Mammary epithelial cell (primary cell): ENCODE measurements at regions of chr13 and their contacts with region 1.

Region 1: DNA sequence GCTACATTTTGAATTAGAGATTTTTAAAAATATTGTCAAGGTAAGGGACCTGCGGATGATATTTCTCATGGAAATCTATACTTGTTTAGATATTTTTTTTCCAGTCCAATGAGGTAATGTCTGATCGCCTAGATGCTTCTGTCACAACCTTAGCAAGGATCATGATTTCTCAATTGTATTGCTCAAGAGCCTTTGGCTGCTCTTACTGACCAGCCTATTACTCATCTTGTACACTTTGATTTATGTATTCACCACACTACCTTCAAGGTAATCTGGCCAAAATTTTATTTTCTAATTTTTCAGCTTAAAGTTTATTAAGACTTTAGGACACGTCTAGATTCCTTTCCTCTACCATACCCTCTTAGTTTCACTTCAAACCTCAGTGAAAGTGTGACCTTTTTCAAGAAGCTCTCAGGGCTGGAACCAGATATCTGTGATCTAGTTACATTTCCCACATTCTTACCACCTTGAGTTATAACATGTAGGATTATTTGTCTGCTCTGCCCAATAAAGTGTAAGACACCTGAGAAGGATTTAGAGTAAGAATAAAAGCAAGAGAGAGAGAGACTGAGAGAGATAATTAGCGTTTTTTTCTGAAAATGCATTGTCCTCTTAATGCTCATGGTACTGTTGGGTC is 197.1 kb downstream of the ITGBL1 start:
- DNase-seq: peak; percentile 87
- H3K4me3 ChIP-seq: no peak overlapping the region
- H3K27ac ChIP-seq: no peak overlapping the region
- H3K4me1 ChIP-seq: peaks cover 5% of the 10 kb centered on the region
- H3K27me3 ChIP-seq: no peaks in the 10 kb centered on the region
- CTCF ChIP-seq: no peak

Region 2: GRCh38 chr13:101706651-101707050 is 57.0 kb after region 1 on chr13:
- CTCF ChIA-PET with region 1: no interaction called
- dilution Hi-C with region 1: no loop called
- in situ Hi-C with region 1: no loop called
- intact Hi-C with region 1: loop called (anchors 2 kb)
- DNase-seq: peak; percentile 95
- H3K4me3 ChIP-seq: no peak overlapping the region
- H3K27ac ChIP-seq: no peak overlapping the region
- H3K4me1 ChIP-seq: peaks cover 12% of the 10 kb centered on the region
- H3K27me3 ChIP-seq: peaks cover 12% of the 10 kb centered on the region
- CTCF ChIP-seq: no peak